ENCODE measurements at regions of chr7 and their contacts with region 1.

Region 1: DNA sequence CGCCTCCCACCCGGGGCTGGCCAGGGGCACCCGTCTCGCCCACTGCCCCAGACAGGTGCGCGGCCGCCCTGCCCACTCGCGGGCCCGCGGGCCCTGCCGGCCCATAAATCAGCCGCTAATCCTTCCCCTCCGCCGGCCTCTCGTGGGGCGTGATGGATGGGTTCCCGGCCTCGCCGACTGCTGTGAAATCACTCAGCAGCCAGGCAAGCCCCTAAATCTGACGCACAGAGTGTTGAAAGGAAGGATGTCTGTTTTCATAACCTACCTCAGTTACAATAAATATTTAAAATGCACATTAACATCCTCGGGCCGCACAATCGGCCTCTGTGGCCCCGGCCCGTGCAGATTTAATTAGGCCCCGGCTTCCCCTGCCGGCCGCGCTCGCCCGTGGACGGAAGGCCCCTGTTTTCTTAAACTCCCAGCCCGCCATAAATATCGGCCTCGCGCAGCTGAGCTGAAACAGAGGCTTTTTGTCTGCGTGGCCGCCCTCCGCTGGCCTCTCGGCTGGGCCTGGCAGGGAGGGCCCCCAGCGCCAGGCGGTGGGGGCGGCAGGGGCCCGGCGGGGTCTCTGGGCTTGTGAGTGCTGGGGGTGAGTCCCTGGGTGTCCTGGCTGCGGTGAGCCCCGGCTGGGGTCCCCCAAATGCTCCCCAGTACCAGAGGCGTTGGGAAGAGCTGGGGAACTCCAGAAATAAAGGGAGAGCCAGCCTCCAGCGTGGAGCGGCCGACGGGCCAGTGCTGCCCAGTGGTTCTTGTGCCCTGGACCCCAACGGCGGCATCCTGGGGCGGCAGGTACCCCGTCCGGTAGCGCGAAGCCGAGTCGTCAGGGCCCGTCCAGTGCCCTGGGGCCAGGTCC is 90.7 kb downstream of the UNCX start:
- DNase-seq: peak; percentile 81

Region 2: DNA sequence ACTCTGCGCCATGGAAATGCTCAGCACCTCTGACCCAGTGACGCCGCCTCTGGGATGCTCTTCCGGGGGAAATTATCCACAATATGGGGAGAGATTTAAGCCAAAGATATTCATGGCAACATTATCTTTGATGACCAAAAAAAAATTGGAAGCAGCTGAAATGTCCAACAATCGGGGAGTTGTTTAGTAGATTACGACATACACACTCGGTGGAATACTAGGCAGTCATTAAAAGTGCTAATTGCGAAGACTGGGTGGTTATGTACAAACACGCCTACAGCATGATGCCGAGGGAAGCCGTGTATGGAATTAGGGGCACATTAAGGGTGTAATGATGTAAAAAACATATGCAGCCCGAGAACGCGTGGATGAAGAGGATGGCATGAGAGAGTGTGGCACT is 15.6 kb before region 1 on chr7:
- intact Hi-C with region 1: loop called in 1 of 2 experiments (anchors 1 kb)
- DNase-seq: no peak